Activated B cell treated with CpG ODN at 0.5 μM for 24 hours (primary cell): ENCODE measurements at regions of chr13 and their contacts with region 1.

Region 1: GRCh38 chr13:110561344-110562035 is at the start of gene RAB20:
- DNase-seq: peak; percentile 57
- ATAC-seq: peak; percentile 74
- H3K4me3 Mint-ChIP-seq: peak within 1 kb of the TSS; percentile 96
- H3K27ac Mint-ChIP-seq: peak within 1 kb of the TSS; percentile 84
- H3K4me1 Mint-ChIP-seq: peaks cover 28% of the 10 kb centered on the region
- H3K27me3 Mint-ChIP-seq: peaks cover 5% of the 10 kb centered on the region
- CTCF ChIP-seq: no peak
- total RNA-seq, gene RAB20: 2.7 and 3.1 TPM in 2 replicates

Region 2: GRCh38 chr13:109778102-109778542 is 783.4 kb before region 1 on chr13:
- CTCF ChIA-PET with region 1: no interaction called
- POLR2A ChIA-PET with region 1: no interaction called
- intact Hi-C with region 1: loop called (anchors 5 kb)
- DNase-seq: no peak
- ATAC-seq: no peak
- H3K4me3 Mint-ChIP-seq: no peak overlapping the region
- H3K27ac Mint-ChIP-seq: no peak overlapping the region
- H3K4me1 Mint-ChIP-seq: peaks cover 38% of the 10 kb centered on the region
- H3K27me3 Mint-ChIP-seq: no peaks in the 10 kb centered on the region
- CTCF ChIP-seq: no peak

Region 3: DNA sequence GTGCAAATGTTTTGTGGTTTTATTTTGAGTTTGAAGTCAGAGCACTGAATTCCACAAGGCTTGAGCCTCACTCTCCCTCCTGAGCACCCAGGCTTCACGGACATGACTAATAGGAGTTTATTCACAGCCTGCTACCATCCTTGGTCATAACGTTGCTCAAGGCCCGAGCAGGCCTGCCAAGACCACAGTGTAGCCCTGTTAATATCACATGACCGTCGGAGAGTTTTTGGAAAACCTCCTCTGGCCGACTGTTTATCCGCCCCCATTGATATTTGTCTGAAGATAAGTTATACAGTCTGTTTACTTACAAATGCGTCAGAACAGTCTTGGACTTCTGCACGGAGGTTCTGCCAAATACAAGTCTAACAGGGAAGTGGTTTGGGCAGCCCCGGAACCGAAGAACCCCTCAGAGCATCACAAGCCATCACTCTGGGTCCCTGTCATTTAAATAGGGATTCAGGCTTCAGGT is 164.5 kb before region 1 on chr13:
- CTCF ChIA-PET with region 1: no interaction called
- POLR2A ChIA-PET with region 1: no interaction called
- intact Hi-C with region 1: no loop called
- DNase-seq: no peak
- ATAC-seq: no peak
- H3K4me3 Mint-ChIP-seq: no peak overlapping the region
- H3K27ac Mint-ChIP-seq: no peak overlapping the region
- H3K4me1 Mint-ChIP-seq: no peaks in the 10 kb centered on the region
- H3K27me3 Mint-ChIP-seq: peaks cover 36% of the 10 kb centered on the region
- CTCF ChIP-seq: no peak

Region 4: GRCh38 chr13:110471833-110472162 is 89.7 kb before region 1 on chr13:
- CTCF ChIA-PET with region 1: no interaction called
- POLR2A ChIA-PET with region 1: interaction called, 13 read pairs
- intact Hi-C with region 1: loop called (anchors 2 kb)
- DNase-seq: peak; percentile 59
- ATAC-seq: peak; percentile 93
- H3K4me3 Mint-ChIP-seq: peak overlapping the region; percentile 73
- H3K27ac Mint-ChIP-seq: peak overlapping the region; percentile 83
- H3K4me1 Mint-ChIP-seq: peaks cover 55% of the 10 kb centered on the region
- H3K27me3 Mint-ChIP-seq: no peaks in the 10 kb centered on the region
- CTCF ChIP-seq: no peak

Region 5: DNA sequence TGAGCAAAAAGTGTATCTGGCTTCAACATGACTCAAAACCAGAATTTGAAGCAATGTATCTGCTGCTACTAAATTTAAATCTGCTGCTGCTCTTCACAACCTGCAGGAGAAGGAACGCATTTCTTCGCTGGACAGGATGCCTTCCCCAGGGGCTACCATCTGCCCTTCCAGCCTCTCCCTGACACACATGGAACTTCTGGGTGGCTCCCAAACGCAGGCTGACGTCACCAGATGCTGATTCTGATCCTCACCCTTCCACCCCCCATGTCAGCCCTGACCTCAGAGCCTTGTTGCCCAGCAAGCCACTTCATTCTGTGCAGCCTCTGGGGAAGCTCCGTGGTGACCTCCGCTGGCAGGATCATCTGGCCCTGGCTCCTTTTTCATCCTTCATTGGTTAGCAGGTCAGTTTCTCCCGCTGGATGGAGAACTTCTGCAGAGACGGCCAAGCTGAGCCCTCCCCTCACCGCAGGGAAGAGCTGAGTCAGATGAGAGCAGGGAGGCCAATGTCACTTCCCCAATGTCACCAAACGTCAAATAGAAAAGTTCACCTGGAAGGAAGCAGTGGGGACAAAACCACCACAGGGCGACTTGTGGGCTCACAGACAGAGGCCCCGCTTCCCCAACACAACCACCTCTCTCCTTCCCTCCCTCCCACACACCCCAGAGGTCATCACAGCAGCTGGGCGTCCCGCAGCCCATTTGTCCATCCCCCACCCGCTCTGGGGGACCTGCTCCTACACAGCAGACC is 14.0 kb after region 1 on chr13:
- CTCF ChIA-PET with region 1: no interaction called
- POLR2A ChIA-PET with region 1: interaction called, 14 read pairs
- intact Hi-C with region 1: no loop called
- DNase-seq: no peak
- ATAC-seq: peak; percentile 91
- H3K4me3 Mint-ChIP-seq: peak overlapping the region; percentile 61
- H3K27ac Mint-ChIP-seq: no peak overlapping the region
- H3K4me1 Mint-ChIP-seq: peaks cover 13% of the 10 kb centered on the region
- H3K27me3 Mint-ChIP-seq: peaks cover 18% of the 10 kb centered on the region
- CTCF ChIP-seq: no peak